ENCODE measurements at regions of chr13 and their contacts with region 1.

Region 1: GRCh38 chr13:29595380-29596063 is at the start of gene SLC7A1:
- DNase-seq: peak; percentile 87
- H3K4me3 ChIP-seq: peak within 1 kb of the TSS; percentile 55 to 92 (median 91)
- H3K27ac ChIP-seq: peak within 1 kb of the TSS; percentile 96
- H3K4me1 ChIP-seq: peaks cover 19% of the 10 kb centered on the region
- H3K27me3 ChIP-seq: no peaks in the 10 kb centered on the region
- CTCF ChIP-seq: no peak
- total RNA-seq, gene SLC7A1: 82.7 to 176 TPM

Region 2: GRCh38 chr13:29508130-29508875 is 87.2 kb before region 1 on chr13:
- CTCF ChIA-PET with region 1: no interaction called
- dilution Hi-C with region 1: no loop called
- in situ Hi-C with region 1: no loop called
- intact Hi-C with region 1: loop called (anchors 2 kb)
- DNase-seq: peak; percentile 42
- H3K4me3 ChIP-seq: no peak overlapping the region
- H3K27ac ChIP-seq: no peak overlapping the region
- H3K4me1 ChIP-seq: no peaks in the 10 kb centered on the region
- H3K27me3 ChIP-seq: no peaks in the 10 kb centered on the region
- CTCF ChIP-seq: peak; percentile 97 to 98

Region 3: DNA sequence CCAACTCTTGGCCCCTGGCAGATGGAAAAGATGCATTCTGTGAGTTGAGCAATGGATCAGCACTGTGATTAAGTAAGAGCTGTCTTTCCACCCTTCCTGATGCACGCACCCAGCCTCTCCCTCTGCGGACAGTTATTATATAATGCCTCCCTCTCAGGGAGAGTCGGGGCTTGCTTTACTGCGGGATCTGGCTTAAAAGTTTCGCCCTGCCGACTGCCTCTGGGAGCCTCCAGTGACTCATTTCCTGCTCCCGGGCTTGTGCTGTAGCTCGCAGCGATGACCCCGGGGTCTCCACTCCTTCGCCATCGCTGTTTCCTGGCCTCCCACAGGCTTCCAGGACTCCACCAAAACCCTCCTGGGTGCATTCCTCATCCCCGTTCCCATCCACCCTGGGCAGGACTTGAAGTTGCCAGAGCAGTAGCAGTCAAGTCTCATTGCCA is 107.4 kb after region 1 on chr13:
- CTCF ChIA-PET with region 1: no interaction called
- dilution Hi-C with region 1: no loop called
- in situ Hi-C with region 1: no loop called
- intact Hi-C with region 1: loop called (anchors 1 kb)
- DNase-seq: peak; percentile 90
- H3K4me3 ChIP-seq: no peak overlapping the region
- H3K27ac ChIP-seq: no peak overlapping the region
- H3K4me1 ChIP-seq: no peaks in the 10 kb centered on the region
- H3K27me3 ChIP-seq: no peaks in the 10 kb centered on the region
- CTCF ChIP-seq: no peak

Measured in mammary epithelial cell (primary cell).